CD4-positive, alpha-beta memory T cell (primary cell): ENCODE measurements at regions of chr2 and their contacts with region 1.

Region 1: DNA sequence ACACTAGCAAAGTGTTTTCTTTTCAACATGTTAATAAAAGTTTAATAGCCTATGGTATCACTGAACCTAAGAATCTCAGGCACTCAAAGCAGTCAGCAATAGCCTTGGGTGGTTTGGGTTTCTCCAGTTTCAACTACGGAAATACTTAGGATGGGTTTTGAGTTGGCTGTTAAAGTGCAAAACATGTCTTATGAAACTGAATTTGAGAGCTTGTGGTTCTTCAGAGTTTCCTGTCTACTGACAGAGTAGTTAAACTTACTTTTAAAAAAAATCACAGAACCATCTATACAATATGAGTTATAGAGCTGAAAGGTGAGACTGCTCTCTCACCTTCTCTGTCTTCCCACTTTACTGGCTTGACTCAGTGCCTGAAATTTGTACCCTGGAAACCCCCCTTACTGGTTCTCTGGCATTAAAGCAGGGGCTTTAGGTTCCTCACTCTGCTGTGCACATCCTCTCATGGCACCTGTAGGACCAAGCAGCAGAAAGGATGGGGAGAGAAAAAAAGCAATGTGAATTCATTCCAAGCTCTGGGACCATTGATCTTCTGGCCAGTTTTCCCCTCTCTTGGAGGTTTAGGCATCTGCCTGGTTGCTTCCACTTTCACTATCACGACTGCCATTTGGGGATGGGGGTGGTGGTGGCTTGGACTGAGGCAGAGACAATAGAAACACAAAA is 18.1 kb downstream of the CCDC141 start:
- DNase-seq: peak in 3 of 5 donors; percentile 22 to 47 (median 40)
- H3K4me3 ChIP-seq: peak overlapping the region in 1 of 2 donors; percentile 28
- H3K4me3 Mint-ChIP-seq: peak overlapping the region; percentile 72 to 88 (median 78)
- H3K27ac ChIP-seq: peak overlapping the region; percentile 36
- H3K27ac Mint-ChIP-seq: peak overlapping the region; percentile 76 to 93 (median 89)
- H3K4me1 ChIP-seq: peaks cover 11% of the 10 kb centered on the region
- H3K4me1 Mint-ChIP-seq: peaks cover 7 to 18% (median 17%) of the 10 kb centered on the region in 4 donors
- H3K27me3 ChIP-seq: no peaks in the 10 kb centered on the region
- H3K27me3 Mint-ChIP-seq: no peaks in the 10 kb centered on the region

Region 2: GRCh38 chr2:178891265-178891958 is 140.5 kb before region 1 on chr2:
- CTCF ChIA-PET with region 1: no interaction called
- POLR2A ChIA-PET with region 1: no interaction called
- intact Hi-C with region 1: no loop called
- DNase-seq: peak in 4 of 5 donors; percentile 17 to 36 (median 32)
- H3K4me3 ChIP-seq: no peak overlapping the region
- H3K4me3 Mint-ChIP-seq: no peak overlapping the region
- H3K27ac ChIP-seq: no peak overlapping the region
- H3K27ac Mint-ChIP-seq: no peak overlapping the region
- H3K4me1 ChIP-seq: no peaks in the 10 kb centered on the region
- H3K4me1 Mint-ChIP-seq: peaks cover 0 to 5% (median under 1%) of the 10 kb centered on the region in 4 donors
- H3K27me3 ChIP-seq: no peaks in the 10 kb centered on the region
- H3K27me3 Mint-ChIP-seq: no peaks in the 10 kb centered on the region

Region 3: DNA sequence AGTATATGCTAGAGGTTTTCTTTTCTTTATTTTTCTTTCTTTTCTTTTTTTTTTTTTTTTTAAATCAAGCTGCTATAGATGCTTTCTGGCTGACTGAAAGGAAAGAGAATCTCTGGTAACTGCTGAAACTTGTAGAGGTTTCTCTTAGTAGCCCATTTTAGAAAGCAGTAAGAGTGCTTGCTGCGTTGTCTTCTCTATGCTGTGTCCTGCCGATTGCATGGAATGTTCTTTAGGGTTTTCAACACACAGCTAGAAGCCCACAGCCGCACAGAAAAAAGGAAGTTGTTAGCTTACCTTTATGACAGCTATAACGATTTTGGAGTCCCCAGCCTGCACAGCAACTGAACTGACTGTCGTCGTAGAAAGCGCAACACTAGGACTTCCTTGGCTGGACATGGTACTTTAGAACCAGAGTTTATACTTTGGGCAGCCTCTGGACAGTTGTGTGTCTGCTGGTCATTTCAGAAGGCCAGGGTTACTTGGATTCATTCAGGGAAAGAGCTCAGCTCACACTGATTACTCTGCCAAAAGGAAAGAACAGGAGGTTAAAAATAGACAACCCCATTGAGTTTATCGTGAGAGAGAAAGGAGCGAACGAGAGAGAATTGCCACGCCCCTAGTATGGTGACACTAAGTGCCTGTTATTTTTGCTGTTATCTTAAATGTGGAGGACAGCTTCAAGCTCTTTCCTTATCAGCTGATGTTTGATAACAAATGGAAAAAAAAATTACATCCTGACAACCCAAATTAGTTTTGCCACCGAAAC is 17.9 kb after region 1 on chr2 and contains the start of gene CCDC141:
- CTCF ChIA-PET with region 1: interaction called, 6 read pairs
- POLR2A ChIA-PET with region 1: interaction called, 20 read pairs
- intact Hi-C with region 1: loop called (anchors 2 kb)
- DNase-seq: peak in 3 of 5 donors; percentile 10 to 22 (median 17)
- H3K4me3 ChIP-seq: peak within 1 kb of the TSS; percentile 57 to 58
- H3K4me3 Mint-ChIP-seq: peak within 1 kb of the TSS; percentile 83 to 89 (median 86)
- H3K27ac ChIP-seq: peak within 1 kb of the TSS; percentile 54
- H3K27ac Mint-ChIP-seq: peak within 1 kb of the TSS; percentile 37 to 92 (median 66)
- H3K4me1 ChIP-seq: peaks cover 19% of the 10 kb centered on the region
- H3K4me1 Mint-ChIP-seq: peaks cover 6 to 29% (median 17%) of the 10 kb centered on the region in 4 donors
- H3K27me3 ChIP-seq: no peaks in the 10 kb centered on the region
- H3K27me3 Mint-ChIP-seq: no peaks in the 10 kb centered on the region
- total RNA-seq, gene CCDC141: 8.2 TPM